WTC11 (cell line): ENCODE measurements at regions of chr5 and their contacts with region 1.

Region 1: GRCh38 chr5:39217365-39218281 is 1.7 kb downstream of the FYB1 start:
- DNase-seq: peak; percentile 74
- ATAC-seq: peak; percentile 86
- H3K4me3 Mint-ChIP-seq: no peak overlapping the region
- H3K27ac Mint-ChIP-seq: no peak overlapping the region
- H3K4me1 Mint-ChIP-seq: 0 out of 2 replicates have a peak, but pooled peaks cover 9% of the 10 kb centered on the region
- H3K27me3 Mint-ChIP-seq: no peaks in the 10 kb centered on the region
- CTCF ChIP-seq: peak; percentile 85

Region 2: DNA sequence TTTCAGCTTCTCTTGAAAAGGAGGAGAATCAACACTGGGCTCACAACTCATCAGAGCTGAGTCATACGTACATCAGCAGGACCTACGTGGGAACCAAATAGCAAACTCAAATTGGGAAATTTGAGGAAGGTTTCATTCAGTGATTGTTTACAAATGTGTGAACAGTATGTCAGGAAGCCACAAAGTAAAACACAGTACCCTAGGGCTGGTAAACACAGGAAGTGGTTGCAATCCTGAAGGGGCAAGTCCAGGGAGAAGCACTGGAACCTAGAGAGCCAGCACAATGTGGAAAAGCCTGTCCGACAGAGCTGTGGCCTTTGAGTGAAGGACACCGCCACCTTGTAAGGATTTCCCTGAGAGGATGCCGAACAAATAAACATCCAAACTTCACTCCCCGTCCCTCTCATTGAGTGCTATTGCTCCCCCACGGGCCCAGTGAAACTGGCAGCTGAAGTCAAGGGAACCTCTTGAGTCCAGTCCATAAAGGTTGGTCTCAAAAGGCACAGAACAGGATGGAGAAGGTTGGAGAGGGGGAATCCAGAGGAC is 116.7 kb before region 1 on chr5:
- CTCF ChIA-PET with region 1: no interaction called
- POLR2A ChIA-PET with region 1: no interaction called
- DNase-seq: no peak
- ATAC-seq: no peak
- H3K4me3 Mint-ChIP-seq: no peak overlapping the region
- H3K27ac Mint-ChIP-seq: no peak overlapping the region
- H3K4me1 Mint-ChIP-seq: no peaks in the 10 kb centered on the region
- H3K27me3 Mint-ChIP-seq: no peaks in the 10 kb centered on the region
- CTCF ChIP-seq: no peak

Region 3: GRCh38 chr5:39201160-39201780 is 16.4 kb before region 1 on chr5:
- CTCF ChIA-PET with region 1: interaction called, 11 read pairs
- POLR2A ChIA-PET with region 1: no interaction called
- DNase-seq: no peak
- ATAC-seq: no peak
- H3K4me3 Mint-ChIP-seq: no peak overlapping the region
- H3K27ac Mint-ChIP-seq: no peak overlapping the region
- H3K4me1 Mint-ChIP-seq: peaks cover 4% of the 10 kb centered on the region; the same call in 1 of the 2 replicates
- H3K27me3 Mint-ChIP-seq: no peaks in the 10 kb centered on the region
- CTCF ChIP-seq: no peak

Region 4: GRCh38 chr5:39253196-39253595 is 35.6 kb after region 1 on chr5:
- CTCF ChIA-PET with region 1: interaction called, 10 read pairs
- POLR2A ChIA-PET with region 1: no interaction called
- DNase-seq: no peak
- ATAC-seq: no peak
- H3K4me3 Mint-ChIP-seq: no peak overlapping the region
- H3K27ac Mint-ChIP-seq: no peak overlapping the region
- H3K4me1 Mint-ChIP-seq: no peaks in the 10 kb centered on the region
- H3K27me3 Mint-ChIP-seq: no peaks in the 10 kb centered on the region
- CTCF ChIP-seq: no peak

Region 5: GRCh38 chr5:39376293-39376714 is 158.7 kb after region 1 on chr5:
- CTCF ChIA-PET with region 1: interaction called, 24 read pairs
- POLR2A ChIA-PET with region 1: no interaction called
- DNase-seq: peak; percentile 38
- ATAC-seq: peak; percentile 97
- H3K4me3 Mint-ChIP-seq: no peak overlapping the region
- H3K27ac Mint-ChIP-seq: no peak overlapping the region
- H3K4me1 Mint-ChIP-seq: peaks cover 20% of the 10 kb centered on the region
- H3K27me3 Mint-ChIP-seq: no peaks in the 10 kb centered on the region
- CTCF ChIP-seq: peak; percentile 66

Region 6: GRCh38 chr5:39547553-39548154 is 330.0 kb after region 1 on chr5:
- CTCF ChIA-PET with region 1: interaction called, 16 read pairs
- POLR2A ChIA-PET with region 1: no interaction called
- DNase-seq: no peak
- ATAC-seq: peak; percentile 47; the same call in 1 of the 2 replicates
- H3K4me3 Mint-ChIP-seq: no peak overlapping the region
- H3K27ac Mint-ChIP-seq: no peak overlapping the region
- H3K4me1 Mint-ChIP-seq: no peaks in the 10 kb centered on the region
- H3K27me3 Mint-ChIP-seq: no peaks in the 10 kb centered on the region
- CTCF ChIP-seq: peak; percentile 34; the same call in 1 of the 2 replicates